ENCODE measurements at regions of chr10 and their contacts with region 1.

Region 1: GRCh38 chr10:1483826-1484225 is 253.5 kb downstream of the ADARB2 start:
- DNase-seq: no peak
- ATAC-seq: no peak
- H3K4me3 ChIP-seq: no peak overlapping the region
- H3K4me3 Mint-ChIP-seq: no peak overlapping the region
- H3K27ac ChIP-seq: no peak overlapping the region
- H3K27ac Mint-ChIP-seq: no peak overlapping the region
- H3K4me1 ChIP-seq: no peaks in the 10 kb centered on the region
- H3K4me1 Mint-ChIP-seq: no peaks in the 10 kb centered on the region
- H3K27me3 ChIP-seq: peaks cover 0 to 3% of the 10 kb centered on the region in 2 donors
- H3K27me3 Mint-ChIP-seq: peaks cover 0 to 17% (median 6%) of the 10 kb centered on the region in 5 donors

Region 2: DNA sequence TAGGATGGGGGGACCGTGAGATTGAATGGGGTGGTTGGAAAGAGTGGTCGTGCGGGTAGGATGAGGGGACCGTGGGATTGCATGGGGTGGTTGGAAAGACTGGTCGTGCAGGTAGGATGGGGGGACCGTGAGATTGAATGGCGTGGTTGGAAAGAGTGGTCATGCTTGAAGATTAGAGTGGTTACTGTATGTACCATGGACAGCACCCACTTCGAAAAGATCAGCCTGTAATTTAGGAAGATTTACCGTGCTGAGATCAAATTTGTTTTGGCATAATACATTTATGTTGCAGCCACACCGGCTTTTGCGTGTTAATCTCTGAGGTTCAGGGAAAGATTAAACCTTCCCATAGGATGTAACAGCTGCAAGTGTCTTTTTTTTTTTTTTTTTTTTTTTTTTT is 748.7 kb after region 1 on chr10:
- CTCF ChIA-PET with region 1: no interaction called
- POLR2A ChIA-PET with region 1: no interaction called
- intact Hi-C with region 1: loop called in 1 of 2 experiments (anchors 5 kb)
- DNase-seq: no peak
- ATAC-seq: no peak
- H3K4me3 ChIP-seq: no peak overlapping the region
- H3K4me3 Mint-ChIP-seq: no peak overlapping the region
- H3K27ac ChIP-seq: no peak overlapping the region
- H3K27ac Mint-ChIP-seq: no peak overlapping the region
- H3K4me1 ChIP-seq: no peaks in the 10 kb centered on the region
- H3K4me1 Mint-ChIP-seq: no peaks in the 10 kb centered on the region
- H3K27me3 ChIP-seq: no peaks in the 10 kb centered on the region
- H3K27me3 Mint-ChIP-seq: peaks cover 0 to 8% (median 0%) of the 10 kb centered on the region in 5 donors